ENCODE measurements at regions of chr5 and their contacts with region 1.

Region 1: DNA sequence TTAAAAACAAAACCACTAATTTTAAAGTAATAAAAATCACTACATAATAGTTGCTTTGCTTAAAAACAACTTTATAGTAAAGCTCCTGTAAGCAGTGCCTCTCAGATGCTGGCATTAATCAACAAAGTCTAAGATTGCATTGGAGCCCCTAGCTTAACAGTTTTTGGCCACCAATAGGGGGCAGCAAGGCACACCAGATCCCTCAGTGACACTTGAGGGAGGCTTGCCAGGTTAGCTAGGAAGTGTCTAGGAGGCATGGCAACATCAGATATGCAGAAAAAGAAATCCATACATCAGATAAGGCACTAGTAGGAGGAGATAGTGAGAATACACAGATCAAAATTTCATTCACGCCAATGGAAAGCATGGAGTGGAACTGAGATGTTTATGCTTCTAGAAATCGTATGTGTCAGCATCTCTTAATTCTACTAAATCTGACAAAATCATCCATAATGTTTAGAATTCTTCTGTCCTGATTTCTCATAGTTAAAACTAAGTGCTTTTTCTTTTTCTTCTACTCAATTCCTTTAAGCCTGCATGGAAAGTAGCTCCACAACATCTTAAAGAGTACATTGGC is 73.6 kb upstream of the PAM start:
- DNase-seq: peak; percentile 93
- ATAC-seq: peak; percentile 74
- H3K4me3 ChIP-seq: no peak overlapping the region
- H3K27ac ChIP-seq: no peak overlapping the region
- H3K4me1 ChIP-seq: peaks cover 36% of the 10 kb centered on the region
- H3K27me3 ChIP-seq: no peaks in the 10 kb centered on the region
- CTCF ChIP-seq: peak; percentile 99

Region 2: GRCh38 chr5:102536323-102536928 is 145.1 kb before region 1 on chr5:
- CTCF ChIA-PET with region 1: interaction called, 4 read pairs
- POLR2A ChIA-PET with region 1: no interaction called
- intact Hi-C with region 1: loop called (anchors 5 kb)
- DNase-seq: peak; percentile 63
- ATAC-seq: peak; percentile 57
- H3K4me3 ChIP-seq: no peak overlapping the region
- H3K27ac ChIP-seq: no peak overlapping the region
- H3K4me1 ChIP-seq: no peaks in the 10 kb centered on the region
- H3K27me3 ChIP-seq: peaks cover 3% of the 10 kb centered on the region
- CTCF ChIP-seq: peak; percentile 79

Region 3: GRCh38 chr5:102700120-102700831 is 18.8 kb after region 1 on chr5:
- CTCF ChIA-PET with region 1: no interaction called
- POLR2A ChIA-PET with region 1: no interaction called
- intact Hi-C with region 1: no loop called
- DNase-seq: no peak
- ATAC-seq: no peak; the same call in 1 of the 2 replicates
- H3K4me3 ChIP-seq: no peak overlapping the region
- H3K27ac ChIP-seq: no peak overlapping the region
- H3K4me1 ChIP-seq: no peaks in the 10 kb centered on the region
- H3K27me3 ChIP-seq: no peaks in the 10 kb centered on the region
- CTCF ChIP-seq: no peak

Region 4: DNA sequence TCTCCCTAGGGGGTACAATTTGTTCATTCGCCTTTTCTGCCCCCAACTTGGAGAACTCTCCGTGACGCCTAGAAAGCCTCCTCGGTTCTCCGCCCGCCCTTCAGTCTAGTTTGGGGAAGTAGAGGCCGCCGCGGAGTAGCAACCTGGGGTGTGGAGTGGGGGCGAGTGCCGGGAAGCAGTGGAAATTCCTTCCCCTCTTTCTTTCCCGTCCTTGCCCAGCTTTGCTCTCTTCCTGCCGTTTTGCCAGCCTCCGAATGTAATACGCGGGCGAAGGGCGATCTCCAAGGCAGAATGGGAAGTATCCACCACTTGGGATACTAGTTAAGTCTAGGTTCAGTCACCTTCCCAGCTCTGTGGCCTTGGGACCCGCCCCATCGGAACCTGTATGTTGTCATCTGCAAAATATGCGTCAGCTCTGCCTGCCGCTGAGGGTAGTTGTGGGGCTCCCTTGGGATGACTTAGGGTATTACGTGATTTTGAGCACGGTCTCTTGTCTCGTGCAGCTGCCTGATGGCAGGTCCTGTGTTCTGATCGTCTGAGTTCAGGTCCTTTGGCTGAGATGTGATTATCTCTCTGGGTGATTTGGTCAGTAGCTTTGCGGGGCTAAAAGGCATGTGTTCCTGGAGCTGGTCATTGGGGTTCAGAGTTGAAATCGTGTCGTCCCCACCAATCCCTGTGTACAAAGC is 74.3 kb after region 1 on chr5:
- CTCF ChIA-PET with region 1: interaction called, 24 read pairs
- POLR2A ChIA-PET with region 1: no interaction called
- intact Hi-C with region 1: loop called (anchors 1 kb)
- DNase-seq: peak; percentile 88
- ATAC-seq: peak; percentile 70
- H3K4me3 ChIP-seq: peak overlapping the region; percentile 88
- H3K27ac ChIP-seq: peak overlapping the region; percentile 6; the same call in 1 of the 2 replicates
- H3K4me1 ChIP-seq: peaks cover 25% of the 10 kb centered on the region
- H3K27me3 ChIP-seq: no peaks in the 10 kb centered on the region
- CTCF ChIP-seq: no peak

Region 5: GRCh38 chr5:102792705-102793104 is 111.2 kb after region 1 on chr5:
- CTCF ChIA-PET with region 1: interaction called, 11 read pairs
- POLR2A ChIA-PET with region 1: no interaction called
- intact Hi-C with region 1: no loop called
- DNase-seq: peak; percentile 66
- ATAC-seq: 0 out of 2 replicates have a peak, but pooled peaks have one; percentile 24
- H3K4me3 ChIP-seq: no peak overlapping the region
- H3K27ac ChIP-seq: no peak overlapping the region
- H3K4me1 ChIP-seq: peaks cover 24% of the 10 kb centered on the region
- H3K27me3 ChIP-seq: no peaks in the 10 kb centered on the region
- CTCF ChIP-seq: peak; percentile 92

Region 6: DNA sequence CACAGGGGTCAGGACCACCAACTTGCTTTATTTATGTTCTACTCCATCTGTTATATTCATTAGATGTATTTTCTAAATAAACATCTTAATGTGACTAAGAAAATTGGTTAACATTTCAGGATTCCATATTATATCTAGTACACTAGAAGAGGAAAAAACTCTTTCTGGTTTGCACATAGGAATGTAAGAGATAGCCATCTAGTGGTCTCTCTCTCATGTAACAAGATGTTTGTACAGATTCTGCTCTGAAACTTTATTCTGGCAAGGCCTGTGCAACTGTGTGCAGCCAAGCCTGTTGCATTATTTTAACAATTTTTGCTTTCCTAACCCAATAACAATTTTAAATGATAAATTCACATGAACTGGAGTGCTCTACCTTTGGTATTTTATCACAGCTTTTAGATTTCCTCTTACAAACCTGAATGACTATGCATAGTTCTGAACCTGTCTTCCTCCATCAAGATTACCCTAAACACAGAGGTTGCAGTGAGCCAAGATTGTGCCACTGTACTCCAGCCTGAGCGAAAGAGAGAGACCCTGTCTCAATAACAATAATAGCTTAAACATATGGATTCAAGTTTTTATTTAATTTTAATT is 290.3 kb after region 1 on chr5:
- CTCF ChIA-PET with region 1: no interaction called
- POLR2A ChIA-PET with region 1: no interaction called
- intact Hi-C with region 1: loop called (anchors 1 kb)
- DNase-seq: peak; percentile 70
- ATAC-seq: peak; percentile 82
- H3K4me3 ChIP-seq: no peak overlapping the region
- H3K27ac ChIP-seq: no peak overlapping the region
- H3K4me1 ChIP-seq: peaks cover 6% of the 10 kb centered on the region; the same call in 1 of the 2 replicates
- H3K27me3 ChIP-seq: no peaks in the 10 kb centered on the region
- CTCF ChIP-seq: peak; percentile 86

Region 7: DNA sequence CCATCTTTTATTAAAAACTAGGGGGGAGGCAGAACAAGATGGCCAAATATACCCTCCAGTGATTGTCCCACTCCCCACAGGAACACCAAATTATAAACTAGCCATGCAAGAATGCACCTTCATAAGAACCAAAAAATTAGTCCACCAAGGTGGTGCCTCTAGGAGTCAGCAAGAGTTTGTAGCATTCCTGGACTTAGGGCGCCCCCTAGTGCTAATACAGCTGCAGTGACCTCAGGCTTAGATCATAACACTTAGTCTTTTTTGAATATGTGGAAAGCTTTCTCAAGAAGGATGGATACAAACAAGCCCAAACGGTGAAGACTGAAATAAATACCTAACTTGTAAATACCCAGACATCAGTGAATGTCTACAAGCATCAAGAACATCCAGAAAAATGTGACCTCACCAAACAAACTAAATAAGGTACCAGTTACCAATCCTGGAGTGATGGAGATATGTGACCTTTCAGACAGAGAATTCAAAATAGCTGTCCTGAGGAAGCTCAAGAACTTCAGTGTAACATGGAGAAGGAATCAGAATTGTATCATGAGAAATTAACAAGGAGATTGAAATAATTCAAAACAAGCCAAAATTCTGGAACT is 457.9 kb after region 1 on chr5:
- CTCF ChIA-PET with region 1: no interaction called
- POLR2A ChIA-PET with region 1: no interaction called
- intact Hi-C with region 1: loop called (anchors 5 kb)
- DNase-seq: peak; percentile 91
- ATAC-seq: peak; percentile 100
- H3K4me3 ChIP-seq: no peak overlapping the region
- H3K27ac ChIP-seq: no peak overlapping the region
- H3K4me1 ChIP-seq: no peaks in the 10 kb centered on the region
- H3K27me3 ChIP-seq: no peaks in the 10 kb centered on the region
- CTCF ChIP-seq: peak; percentile 100